CD8-positive, alpha-beta T cell (primary cell): ENCODE measurements at regions of chr1 and their contacts with region 1.

Region 1: DNA sequence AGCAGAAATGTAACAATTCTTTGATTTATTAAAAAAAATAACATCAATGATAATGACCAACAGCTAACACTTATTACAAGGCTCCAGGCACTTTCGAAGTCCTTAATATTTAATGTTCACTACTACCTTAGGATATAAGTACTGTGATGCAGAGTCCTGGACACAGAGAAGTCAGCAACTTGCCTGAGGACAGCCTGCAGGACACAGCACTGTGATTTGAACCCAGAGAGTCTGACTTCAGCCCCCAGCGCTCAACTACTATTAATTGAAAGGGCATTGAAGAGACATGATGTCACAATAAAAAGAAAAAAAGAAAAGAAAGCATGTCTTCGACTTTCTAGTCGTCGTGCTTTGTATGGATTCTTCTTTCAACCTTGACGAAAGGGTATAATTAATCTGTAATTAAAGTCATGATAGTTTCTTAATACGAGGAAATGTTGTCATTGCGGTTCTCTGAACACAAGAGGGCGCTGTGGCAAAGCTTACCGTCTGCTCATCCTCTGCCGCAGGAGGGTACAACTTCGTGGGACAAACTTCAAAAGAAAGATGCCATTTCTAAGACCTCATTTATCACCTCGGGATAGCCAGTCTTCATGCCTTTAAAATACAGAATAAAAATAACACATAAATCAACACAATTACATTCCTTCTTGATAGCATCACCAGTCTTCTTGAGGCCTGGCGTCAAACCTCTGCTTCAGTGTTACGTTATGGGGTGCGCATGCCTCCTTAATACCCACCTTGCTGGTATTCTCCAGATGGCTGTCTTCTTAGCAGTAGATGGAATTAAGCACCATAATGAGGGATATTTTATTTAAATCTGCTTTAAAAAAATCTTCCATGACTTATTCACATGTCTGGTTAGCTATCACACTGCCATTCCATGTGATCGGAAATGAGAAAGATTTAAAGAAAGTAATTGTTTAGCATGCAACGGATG is 240.1 kb downstream of the DISC1 start:
- DNase-seq: peak; percentile 22 to 75 (median 61)
- ATAC-seq: no peak
- H3K4me3 ChIP-seq: no peak overlapping the region
- H3K4me3 Mint-ChIP-seq: no peak overlapping the region
- H3K27ac ChIP-seq: no peak overlapping the region
- H3K27ac Mint-ChIP-seq: no peak overlapping the region
- H3K4me1 ChIP-seq: peaks cover 2% of the 10 kb centered on the region
- H3K4me1 Mint-ChIP-seq: peaks cover 44% of the 10 kb centered on the region
- H3K27me3 ChIP-seq: no peaks in the 10 kb centered on the region
- H3K27me3 Mint-ChIP-seq: no peaks in the 10 kb centered on the region
- CTCF ChIP-seq: peak; percentile 94

Region 2: GRCh38 chr1:231931846-231932454 is 65.3 kb after region 1 on chr1:
- CTCF ChIA-PET with region 1: interaction called, 42 read pairs
- POLR2A ChIA-PET with region 1: no interaction called
- intact Hi-C with region 1: loop called (anchors 1 to 2 kb)
- DNase-seq: peak in 5 of 9 experiments; percentile 19 to 72 (median 51)
- ATAC-seq: no peak
- H3K4me3 ChIP-seq: no peak overlapping the region
- H3K4me3 Mint-ChIP-seq: no peak overlapping the region
- H3K27ac ChIP-seq: no peak overlapping the region
- H3K27ac Mint-ChIP-seq: no peak overlapping the region
- H3K4me1 ChIP-seq: peaks cover 20% of the 10 kb centered on the region
- H3K4me1 Mint-ChIP-seq: peaks cover 30% of the 10 kb centered on the region
- H3K27me3 ChIP-seq: no peaks in the 10 kb centered on the region
- H3K27me3 Mint-ChIP-seq: no peaks in the 10 kb centered on the region
- CTCF ChIP-seq: peak; percentile 58

Region 3: DNA sequence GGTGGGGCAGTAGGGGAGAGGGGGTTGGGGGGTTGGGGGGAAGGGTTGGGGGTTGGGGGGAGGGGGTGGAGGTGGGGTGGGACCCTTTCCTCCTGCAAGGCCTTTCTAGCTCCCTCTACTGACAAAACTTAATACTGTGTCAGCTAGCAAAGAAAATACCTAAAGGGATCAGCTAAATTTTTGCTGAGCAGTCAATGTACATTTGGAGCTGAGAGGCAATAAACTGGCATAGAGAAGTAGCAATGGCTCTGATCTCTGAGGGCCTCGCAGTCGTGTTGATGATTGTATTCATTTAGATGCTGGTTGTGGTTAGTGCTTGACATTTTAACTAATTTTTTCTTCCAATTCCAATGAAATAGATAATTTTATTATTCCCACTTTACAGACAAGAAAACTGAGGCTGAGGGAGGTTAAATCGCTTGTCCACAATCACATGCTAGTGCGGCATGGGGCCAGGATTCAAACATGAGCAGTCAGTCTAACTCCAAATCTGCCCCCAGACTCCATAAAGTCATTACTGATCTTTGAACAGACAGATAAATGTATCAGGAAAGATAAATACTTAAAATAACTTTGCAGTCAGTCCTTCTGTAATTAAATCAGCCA is 117.0 kb after region 1 on chr1:
- CTCF ChIA-PET with region 1: interaction called, 15 read pairs
- POLR2A ChIA-PET with region 1: no interaction called
- intact Hi-C with region 1: loop called in 1 of 2 experiments (anchors 2 kb)
- DNase-seq: no peak
- ATAC-seq: no peak
- H3K4me3 ChIP-seq: no peak overlapping the region
- H3K4me3 Mint-ChIP-seq: no peak overlapping the region
- H3K27ac ChIP-seq: no peak overlapping the region
- H3K27ac Mint-ChIP-seq: no peak overlapping the region
- H3K4me1 ChIP-seq: no peaks in the 10 kb centered on the region
- H3K4me1 Mint-ChIP-seq: peaks cover 16% of the 10 kb centered on the region
- H3K27me3 ChIP-seq: no peaks in the 10 kb centered on the region
- H3K27me3 Mint-ChIP-seq: no peaks in the 10 kb centered on the region
- CTCF ChIP-seq: no peak

Region 4: DNA sequence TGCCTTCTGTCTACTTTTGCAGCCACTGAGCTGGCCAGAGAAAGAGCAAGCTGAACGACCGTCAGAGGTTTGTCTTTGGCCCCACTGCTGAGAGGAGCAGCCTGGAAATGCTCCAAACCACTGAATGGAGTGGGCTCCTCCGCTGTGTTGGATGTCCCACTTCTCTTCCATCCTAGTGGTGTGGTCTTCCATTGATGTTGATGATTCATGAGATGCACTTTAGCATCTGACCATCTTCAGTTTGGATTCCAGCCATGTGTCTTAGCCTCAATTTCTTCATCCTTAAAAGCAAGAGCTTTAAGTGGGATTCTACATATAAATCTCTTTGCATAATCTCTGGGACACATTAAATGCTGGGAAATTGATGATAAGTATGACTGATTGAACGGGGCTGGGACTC is 486.3 kb after region 1 on chr1:
- CTCF ChIA-PET with region 1: no interaction called
- POLR2A ChIA-PET with region 1: no interaction called
- intact Hi-C with region 1: no loop called
- DNase-seq: no peak
- ATAC-seq: no peak
- H3K4me3 ChIP-seq: no peak overlapping the region
- H3K4me3 Mint-ChIP-seq: no peak overlapping the region
- H3K27ac ChIP-seq: no peak overlapping the region
- H3K27ac Mint-ChIP-seq: no peak overlapping the region
- H3K4me1 ChIP-seq: no peaks in the 10 kb centered on the region
- H3K4me1 Mint-ChIP-seq: no peaks in the 10 kb centered on the region
- H3K27me3 ChIP-seq: no peaks in the 10 kb centered on the region
- H3K27me3 Mint-ChIP-seq: peaks cover 18% of the 10 kb centered on the region
- CTCF ChIP-seq: no peak